CD8-positive, alpha-beta T cell (primary cell): ENCODE measurements at regions of chr3 and their contacts with region 1.

Region 1: GRCh38 chr3:112473212-112473640 is 26.0 kb downstream of the BTLA start:
- DNase-seq: peak in 2 of 9 experiments; percentile 37 to 61
- ATAC-seq: peak; percentile 40
- H3K4me3 ChIP-seq: no peak overlapping the region
- H3K4me3 Mint-ChIP-seq: peak overlapping the region; percentile 78
- H3K27ac ChIP-seq: peak overlapping the region in 1 of 2 experiments; percentile 28
- H3K27ac Mint-ChIP-seq: peak overlapping the region; percentile 92
- H3K4me1 ChIP-seq: peaks cover 58% of the 10 kb centered on the region
- H3K4me1 Mint-ChIP-seq: peaks cover 73% of the 10 kb centered on the region
- H3K27me3 ChIP-seq: no peaks in the 10 kb centered on the region
- H3K27me3 Mint-ChIP-seq: no peaks in the 10 kb centered on the region
- CTCF ChIP-seq: no peak

Region 2: GRCh38 chr3:112228786-112229185 is 244.4 kb before region 1 on chr3:
- CTCF ChIA-PET with region 1: no interaction called
- POLR2A ChIA-PET with region 1: no interaction called
- intact Hi-C with region 1: no loop called
- DNase-seq: no peak
- ATAC-seq: no peak
- H3K4me3 ChIP-seq: no peak overlapping the region
- H3K4me3 Mint-ChIP-seq: no peak overlapping the region
- H3K27ac ChIP-seq: no peak overlapping the region
- H3K27ac Mint-ChIP-seq: no peak overlapping the region
- H3K4me1 ChIP-seq: no peaks in the 10 kb centered on the region
- H3K4me1 Mint-ChIP-seq: no peaks in the 10 kb centered on the region
- H3K27me3 ChIP-seq: no peaks in the 10 kb centered on the region
- H3K27me3 Mint-ChIP-seq: no peaks in the 10 kb centered on the region
- CTCF ChIP-seq: no peak

Region 3: DNA sequence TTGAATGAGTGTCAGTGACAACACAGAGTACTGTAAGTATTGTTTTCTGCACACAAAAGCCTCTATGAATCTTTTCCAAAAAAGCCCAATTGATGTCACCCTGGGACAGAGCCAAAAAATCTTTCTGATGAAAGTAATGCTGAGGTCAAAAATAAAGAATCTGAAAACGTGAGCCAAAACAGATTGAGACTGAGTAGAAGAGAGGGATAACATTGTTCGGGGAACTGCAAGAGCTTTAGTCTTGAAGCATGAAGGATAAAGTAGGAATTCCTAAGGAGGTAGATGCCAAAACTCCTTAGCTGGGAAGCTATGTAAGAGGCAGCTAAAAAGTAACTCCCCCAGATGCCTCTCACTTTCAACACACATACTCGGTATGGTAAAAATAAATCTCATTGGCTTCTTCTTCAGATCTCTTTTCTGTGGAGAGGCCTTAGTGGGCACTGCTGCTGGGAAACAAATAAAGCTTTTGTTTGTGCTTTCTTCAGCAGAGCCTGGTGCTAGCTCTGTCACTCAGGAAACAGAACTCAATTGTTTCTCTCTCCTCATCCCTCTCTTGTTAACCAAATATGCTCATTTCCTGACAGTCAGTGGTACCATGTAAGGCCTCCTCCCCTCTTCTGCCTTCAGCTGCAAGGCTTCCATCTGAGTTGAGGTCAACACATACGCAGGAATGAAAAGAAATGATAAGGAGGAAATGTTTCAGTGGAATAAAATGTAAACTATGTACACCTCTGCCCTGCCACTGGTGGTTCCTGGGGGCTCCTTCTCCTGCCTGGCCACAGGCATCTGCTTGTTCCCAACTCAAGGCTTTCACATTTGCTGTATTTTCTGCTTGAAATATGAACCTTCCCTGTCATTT is 82.2 kb before region 1 on chr3:
- CTCF ChIA-PET with region 1: no interaction called
- POLR2A ChIA-PET with region 1: no interaction called
- intact Hi-C with region 1: no loop called
- DNase-seq: peak in 1 of 9 experiments; percentile 11
- ATAC-seq: no peak
- H3K4me3 ChIP-seq: no peak overlapping the region
- H3K4me3 Mint-ChIP-seq: no peak overlapping the region
- H3K27ac ChIP-seq: no peak overlapping the region
- H3K27ac Mint-ChIP-seq: peak overlapping the region; percentile 7
- H3K4me1 ChIP-seq: peaks cover 7% of the 10 kb centered on the region
- H3K4me1 Mint-ChIP-seq: peaks cover 28% of the 10 kb centered on the region
- H3K27me3 ChIP-seq: no peaks in the 10 kb centered on the region
- H3K27me3 Mint-ChIP-seq: no peaks in the 10 kb centered on the region
- CTCF ChIP-seq: no peak

Region 4: DNA sequence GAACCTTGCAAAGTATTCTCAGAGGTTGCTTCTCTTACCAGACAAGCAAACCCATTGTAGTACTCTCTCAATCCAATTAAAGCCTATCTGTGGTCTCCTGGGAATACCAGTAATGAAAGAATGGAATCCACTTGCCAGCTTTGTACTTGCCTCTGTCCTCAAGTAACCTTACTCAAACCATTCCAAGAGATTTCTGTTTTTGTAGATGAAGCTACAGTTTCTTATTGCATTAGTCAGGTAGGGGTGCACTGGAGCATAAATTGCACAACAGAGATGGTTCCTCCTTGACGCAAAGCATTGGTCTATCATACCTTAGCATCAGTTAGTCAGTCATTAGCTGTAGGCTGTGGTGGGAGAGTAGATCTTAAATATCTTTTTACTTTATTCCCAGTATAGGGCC is 26.9 kb before region 1 on chr3:
- CTCF ChIA-PET with region 1: no interaction called
- POLR2A ChIA-PET with region 1: no interaction called
- intact Hi-C with region 1: loop called in 1 of 2 experiments (anchors 1 kb)
- DNase-seq: no peak
- ATAC-seq: no peak
- H3K4me3 ChIP-seq: no peak overlapping the region
- H3K4me3 Mint-ChIP-seq: no peak overlapping the region
- H3K27ac ChIP-seq: no peak overlapping the region
- H3K27ac Mint-ChIP-seq: no peak overlapping the region
- H3K4me1 ChIP-seq: peaks cover 6% of the 10 kb centered on the region
- H3K4me1 Mint-ChIP-seq: peaks cover 6% of the 10 kb centered on the region
- H3K27me3 ChIP-seq: no peaks in the 10 kb centered on the region
- H3K27me3 Mint-ChIP-seq: no peaks in the 10 kb centered on the region
- CTCF ChIP-seq: no peak

Region 5: GRCh38 chr3:112489674-112490479 is 16.7 kb after region 1 on chr3:
- CTCF ChIA-PET with region 1: no interaction called
- POLR2A ChIA-PET with region 1: interaction called, 3 read pairs
- intact Hi-C with region 1: loop called in 1 of 2 experiments (anchors 2 kb)
- DNase-seq: peak in 1 of 9 experiments; percentile 25
- ATAC-seq: no peak
- H3K4me3 ChIP-seq: no peak overlapping the region
- H3K4me3 Mint-ChIP-seq: peak overlapping the region; percentile 23
- H3K27ac ChIP-seq: no peak overlapping the region
- H3K27ac Mint-ChIP-seq: peak overlapping the region; percentile 78
- H3K4me1 ChIP-seq: peaks cover 40% of the 10 kb centered on the region
- H3K4me1 Mint-ChIP-seq: peaks cover 63% of the 10 kb centered on the region
- H3K27me3 ChIP-seq: no peaks in the 10 kb centered on the region
- H3K27me3 Mint-ChIP-seq: no peaks in the 10 kb centered on the region
- CTCF ChIP-seq: no peak